ENCODE measurements at regions of chr1 and their contacts with region 1.

Region 1: DNA sequence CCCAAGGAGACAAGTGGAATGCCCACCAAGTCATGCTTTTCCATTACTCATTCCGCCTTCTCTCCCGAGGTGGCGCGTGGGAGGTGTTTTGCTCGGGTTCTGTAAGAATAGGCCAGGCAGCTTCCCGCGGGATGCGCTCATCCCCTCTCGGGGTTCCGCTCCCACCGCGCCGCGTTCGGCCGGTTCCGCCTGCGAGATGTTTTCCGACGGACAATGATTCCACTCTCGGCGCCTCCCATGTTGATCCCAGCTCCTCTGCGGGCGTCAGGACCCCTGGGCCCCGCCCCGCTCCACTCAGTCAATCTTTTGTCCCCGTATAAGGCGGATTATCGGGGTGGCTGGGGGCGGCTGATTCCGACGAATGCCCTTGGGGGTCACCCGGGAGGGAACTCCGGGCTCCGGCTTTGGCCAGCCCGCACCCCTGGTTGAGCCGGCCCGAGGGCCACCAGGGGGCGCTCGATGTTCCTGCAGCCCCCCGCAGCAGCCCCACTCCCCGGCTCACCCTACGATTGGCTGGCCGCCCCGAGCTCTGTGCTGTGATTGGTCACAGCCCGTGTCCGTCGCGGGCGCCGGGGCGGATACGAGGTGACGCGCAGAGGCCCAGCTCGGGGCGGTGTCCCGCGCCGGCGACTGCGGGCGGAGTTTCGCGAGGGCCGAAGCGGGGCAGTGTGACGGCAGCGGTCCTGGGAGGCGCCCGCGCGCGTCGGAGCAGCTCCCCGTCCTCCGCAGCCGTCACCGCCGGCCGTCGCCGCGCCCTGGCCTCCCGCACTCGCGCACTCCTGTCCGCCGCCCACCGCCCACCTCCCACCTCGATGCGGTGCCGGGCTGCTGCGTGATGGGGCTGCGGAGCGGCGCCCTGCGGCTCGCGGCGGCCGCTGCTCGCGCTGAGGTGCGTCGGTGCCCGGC is at the start of gene KIF1B:
- DNase-seq: peak; percentile 87
- ATAC-seq: peak; percentile 99
- H3K4me3 ChIP-seq: peak within 1 kb of the TSS; percentile 90
- H3K27ac ChIP-seq: peak within 1 kb of the TSS; percentile 46
- H3K4me1 ChIP-seq: no peaks in the 10 kb centered on the region; the same call in 1 of the 2 replicates
- H3K27me3 ChIP-seq: no peaks in the 10 kb centered on the region
- CTCF ChIP-seq: peak; percentile 89 to 95 (median 95); a peak in 5 of 6 replicates
- EP300 ChIP-seq: no peak
- POLR2A ChIP-seq: peak; percentile 85
- RAD21 ChIP-seq: peak; percentile 65
- polyA plus RNA-seq, gene KIF1B: 2.1 to 2.2 TPM

Region 2: DNA sequence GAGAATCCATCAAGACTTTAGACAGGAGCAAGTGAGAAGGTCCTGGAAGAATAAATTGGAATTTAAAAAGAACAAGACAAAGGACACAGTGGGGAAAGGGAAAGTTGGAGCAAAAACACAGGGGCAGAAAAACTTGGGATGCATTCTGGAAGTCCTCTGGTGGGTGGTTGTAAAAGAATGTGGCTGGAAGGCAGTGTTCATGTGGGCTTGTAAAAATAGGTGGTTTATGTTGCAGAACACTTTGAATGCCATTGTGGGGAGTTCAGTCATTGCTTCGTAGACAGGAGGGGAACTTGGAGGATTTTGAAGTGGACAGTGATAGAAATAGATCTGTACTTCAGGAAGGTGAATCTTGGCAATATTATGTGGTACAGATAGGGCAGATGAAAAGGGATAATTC is 15.4 kb after region 1 on chr1:
- CTCF ChIA-PET with region 1: interaction called, 17 read pairs
- POLR2A ChIA-PET with region 1: interaction called, 3 read pairs
- RAD21 ChIA-PET with region 1: interaction called, 5 read pairs
- SMC1A ChIA-PET with region 1: interaction called, 22 read pairs
- in situ Hi-C with region 1: no loop called
- intact Hi-C with region 1: no loop called
- DNase-seq: no peak
- ATAC-seq: no peak
- H3K4me3 ChIP-seq: no peak overlapping the region
- H3K27ac ChIP-seq: no peak overlapping the region
- H3K4me1 ChIP-seq: no peaks in the 10 kb centered on the region
- H3K27me3 ChIP-seq: no peaks in the 10 kb centered on the region
- CTCF ChIP-seq: no peak
- EP300 ChIP-seq: no peak
- POLR2A ChIP-seq: no peak
- RAD21 ChIP-seq: no peak

Region 3: DNA sequence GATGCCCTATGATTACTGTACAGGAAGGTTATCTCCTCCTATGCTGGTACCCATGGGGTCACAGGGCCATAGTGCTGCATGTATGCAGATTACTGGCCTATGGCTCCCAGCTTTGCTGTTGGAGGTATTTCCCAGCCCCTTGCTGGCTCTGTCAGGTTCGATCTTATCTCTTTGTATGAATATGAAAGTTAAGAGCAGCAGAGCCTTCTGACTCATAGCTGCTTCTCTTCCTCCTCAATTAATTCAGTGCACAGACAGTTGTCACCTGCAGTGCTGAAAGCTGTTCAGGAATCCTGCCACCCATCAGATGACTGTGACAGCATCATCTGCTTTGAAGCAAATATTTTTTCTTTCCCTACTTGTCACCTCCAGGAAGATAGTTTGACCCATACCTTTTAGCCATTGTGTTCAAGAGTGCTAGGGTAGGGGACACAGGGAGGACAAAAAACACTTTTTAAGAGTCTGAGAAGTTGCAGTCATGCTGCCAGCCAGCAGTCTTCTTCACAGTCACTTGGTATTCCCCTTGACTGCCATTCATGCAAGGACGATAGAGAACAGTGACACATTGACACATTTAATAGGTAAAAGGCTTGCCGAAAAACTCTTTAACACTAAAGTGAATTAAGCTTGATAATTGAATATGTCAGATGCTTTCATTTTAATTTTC is 73.3 kb after region 1 on chr1:
- CTCF ChIA-PET with region 1: interaction called, 14 read pairs
- POLR2A ChIA-PET with region 1: interaction called, 6 read pairs
- RAD21 ChIA-PET with region 1: interaction called, 5 read pairs
- SMC1A ChIA-PET with region 1: interaction called, 6 read pairs
- in situ Hi-C with region 1: no loop called
- intact Hi-C with region 1: no loop called
- DNase-seq: peak; percentile 35
- ATAC-seq: peak; percentile 89
- H3K4me3 ChIP-seq: no peak overlapping the region
- H3K27ac ChIP-seq: peak overlapping the region; percentile 69
- H3K4me1 ChIP-seq: 0 out of 2 replicates have a peak, but pooled peaks cover 5% of the 10 kb centered on the region
- H3K27me3 ChIP-seq: no peaks in the 10 kb centered on the region
- CTCF ChIP-seq: no peak
- EP300 ChIP-seq: no peak
- POLR2A ChIP-seq: no peak
- RAD21 ChIP-seq: no peak

Region 4: GRCh38 chr1:10324627-10325026 is 114.5 kb after region 1 on chr1:
- CTCF ChIA-PET with region 1: interaction called, 19 read pairs
- POLR2A ChIA-PET with region 1: no interaction called
- RAD21 ChIA-PET with region 1: interaction called, 3 read pairs
- SMC1A ChIA-PET with region 1: interaction called, 16 read pairs
- in situ Hi-C with region 1: no loop called
- intact Hi-C with region 1: no loop called
- DNase-seq: no peak
- ATAC-seq: no peak
- H3K4me3 ChIP-seq: no peak overlapping the region
- H3K27ac ChIP-seq: no peak overlapping the region
- H3K4me1 ChIP-seq: no peaks in the 10 kb centered on the region
- H3K27me3 ChIP-seq: no peaks in the 10 kb centered on the region
- CTCF ChIP-seq: no peak
- EP300 ChIP-seq: no peak
- POLR2A ChIP-seq: no peak
- RAD21 ChIP-seq: no peak

Region 5: DNA sequence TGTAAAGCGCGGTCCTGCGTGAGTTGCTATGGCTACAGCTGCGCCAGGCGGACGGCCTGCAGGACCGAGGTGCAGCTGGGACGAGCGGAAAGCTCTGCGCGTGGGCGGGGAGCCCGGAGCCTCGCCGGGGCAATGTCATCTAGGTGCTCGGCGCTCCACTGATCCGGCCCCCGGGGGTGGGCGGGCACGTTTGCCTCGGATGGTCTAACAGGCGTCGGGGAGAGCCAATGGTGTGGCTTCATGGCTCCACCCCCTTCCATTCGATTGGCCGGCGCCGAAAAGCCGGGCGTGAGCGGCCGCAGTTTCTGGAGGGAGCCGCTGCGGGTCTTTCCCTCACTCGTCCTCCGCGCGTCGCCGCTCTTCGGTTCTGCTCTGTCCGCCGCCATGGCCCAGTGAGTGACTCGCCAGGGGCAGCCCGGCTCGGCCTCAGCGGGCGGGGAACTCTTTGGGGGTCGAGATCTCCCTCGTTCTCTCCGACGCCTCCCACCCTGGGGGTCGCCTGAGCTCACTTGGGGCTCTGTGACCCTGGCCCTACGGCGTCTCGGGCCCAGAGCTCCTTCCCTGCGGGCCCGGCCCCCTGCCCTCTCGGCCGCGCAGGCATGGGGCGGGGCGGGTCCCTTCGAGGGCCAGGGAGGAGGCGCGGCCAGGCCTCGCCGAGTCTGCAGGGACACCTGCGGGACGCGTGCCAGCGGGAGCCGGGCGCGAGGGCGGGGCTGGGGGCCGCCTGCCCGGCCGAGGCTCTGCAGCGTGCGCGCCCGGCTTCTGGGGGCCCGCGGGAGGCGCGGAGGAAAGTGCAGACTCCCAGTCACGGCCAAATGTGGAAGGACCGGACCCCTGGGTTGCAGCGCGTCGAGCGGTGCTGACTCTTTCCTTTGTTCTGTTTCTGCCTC is 188.8 kb after region 1 on chr1 and contains the start of gene PGD:
- CTCF ChIA-PET with region 1: interaction called, 29 read pairs
- POLR2A ChIA-PET with region 1: no interaction called
- RAD21 ChIA-PET with region 1: interaction called, 16 read pairs
- SMC1A ChIA-PET with region 1: interaction called, 8 read pairs
- in situ Hi-C with region 1: no loop called
- intact Hi-C with region 1: no loop called
- DNase-seq: peak; percentile 89
- ATAC-seq: peak; percentile 97
- H3K4me3 ChIP-seq: peak within 1 kb of the TSS; percentile 88
- H3K27ac ChIP-seq: peak within 1 kb of the TSS; percentile 75
- H3K4me1 ChIP-seq: peaks cover 6% of the 10 kb centered on the region
- H3K27me3 ChIP-seq: no peaks in the 10 kb centered on the region
- CTCF ChIP-seq: no peak
- EP300 ChIP-seq: 0 out of 4 replicates have a peak, but pooled peaks of 1 of the 2 experiments have one; percentile 22
- POLR2A ChIP-seq: peak; percentile 95
- RAD21 ChIP-seq: no peak
- polyA plus RNA-seq, gene PGD: 152 to 190 TPM

Region 6: DNA sequence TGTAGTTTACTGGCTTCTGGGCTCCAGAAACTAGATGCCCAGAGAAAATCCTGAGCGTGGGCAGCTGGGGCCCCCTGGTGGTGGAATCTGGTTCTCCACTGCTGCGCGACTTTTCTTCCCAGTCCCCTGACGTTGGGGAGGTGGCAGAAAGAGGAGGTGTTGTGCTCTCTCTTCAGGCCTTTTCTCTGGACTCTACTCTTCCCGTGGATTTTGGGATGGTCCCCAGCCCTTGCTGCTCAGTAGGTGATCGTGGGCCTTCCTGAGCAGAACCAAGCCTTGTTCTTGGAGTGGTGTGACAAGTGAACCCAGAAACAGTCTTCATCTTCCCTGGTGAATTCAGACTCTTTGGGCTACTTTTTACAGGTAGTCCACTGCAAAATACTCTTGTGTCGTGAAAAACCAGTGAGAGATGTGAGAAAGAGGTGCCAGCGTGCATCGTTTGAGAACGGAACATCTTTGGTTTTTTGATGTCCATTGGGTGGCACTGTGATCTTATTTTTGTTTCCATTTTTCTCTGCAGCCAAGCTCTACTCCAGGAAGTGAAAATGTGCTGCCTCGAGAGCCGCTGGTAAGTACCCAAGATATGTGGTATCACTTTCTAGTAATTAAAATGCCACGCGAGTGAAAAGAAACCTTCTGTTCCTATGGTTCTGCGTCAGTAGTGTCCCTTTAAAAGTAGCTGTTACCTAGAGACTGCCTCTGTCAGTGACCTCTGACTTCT is 284.8 kb after region 1 on chr1:
- CTCF ChIA-PET with region 1: interaction called, 23 read pairs
- POLR2A ChIA-PET with region 1: no interaction called
- RAD21 ChIA-PET with region 1: interaction called, 4 read pairs
- SMC1A ChIA-PET with region 1: no interaction called
- in situ Hi-C with region 1: no loop called
- intact Hi-C with region 1: no loop called
- DNase-seq: peak; percentile 88
- ATAC-seq: peak; percentile 96
- H3K4me3 ChIP-seq: peak overlapping the region; percentile 56
- H3K27ac ChIP-seq: peak overlapping the region; percentile 83
- H3K4me1 ChIP-seq: peaks cover 25% of the 10 kb centered on the region
- H3K27me3 ChIP-seq: no peaks in the 10 kb centered on the region
- CTCF ChIP-seq: peak; percentile 88 to 93 (median 92)
- EP300 ChIP-seq: peak; percentile 38 to 61; a peak in 1 of 4 replicates
- POLR2A ChIP-seq: no peak
- RAD21 ChIP-seq: peak; percentile 82

Measured in GM12878 (cell line).